ENCODE measurements at regions of chr19 and their contacts with region 1.

Region 1: GRCh38 chr19:5803752-5804515 is 933 bp upstream of the NRTN start:
- DNase-seq: peak; percentile 94
- ATAC-seq: peak; percentile 96
- H3K4me3 Mint-ChIP-seq: peak overlapping the region; percentile 70
- H3K27ac Mint-ChIP-seq: peak overlapping the region; percentile 60
- H3K4me1 Mint-ChIP-seq: peaks cover 25% of the 10 kb centered on the region
- H3K27me3 Mint-ChIP-seq: peaks cover 42% of the 10 kb centered on the region

Region 2: GRCh38 chr19:5631568-5632240 is 172.2 kb before region 1 on chr19:
- CTCF ChIA-PET with region 1: no interaction called
- POLR2A ChIA-PET with region 1: no interaction called
- DNase-seq: no peak
- ATAC-seq: no peak
- H3K4me3 Mint-ChIP-seq: no peak overlapping the region
- H3K27ac Mint-ChIP-seq: no peak overlapping the region
- H3K4me1 Mint-ChIP-seq: peaks cover 49% of the 10 kb centered on the region
- H3K27me3 Mint-ChIP-seq: no peaks in the 10 kb centered on the region

Region 3: GRCh38 chr19:5814852-5815246 is 10.9 kb after region 1 on chr19:
- CTCF ChIA-PET with region 1: interaction called, 23 read pairs
- POLR2A ChIA-PET with region 1: no interaction called
- DNase-seq: no peak
- ATAC-seq: no peak
- H3K4me3 Mint-ChIP-seq: no peak overlapping the region
- H3K27ac Mint-ChIP-seq: no peak overlapping the region
- H3K4me1 Mint-ChIP-seq: no peaks in the 10 kb centered on the region
- H3K27me3 Mint-ChIP-seq: peaks cover 2% of the 10 kb centered on the region

Region 4: DNA sequence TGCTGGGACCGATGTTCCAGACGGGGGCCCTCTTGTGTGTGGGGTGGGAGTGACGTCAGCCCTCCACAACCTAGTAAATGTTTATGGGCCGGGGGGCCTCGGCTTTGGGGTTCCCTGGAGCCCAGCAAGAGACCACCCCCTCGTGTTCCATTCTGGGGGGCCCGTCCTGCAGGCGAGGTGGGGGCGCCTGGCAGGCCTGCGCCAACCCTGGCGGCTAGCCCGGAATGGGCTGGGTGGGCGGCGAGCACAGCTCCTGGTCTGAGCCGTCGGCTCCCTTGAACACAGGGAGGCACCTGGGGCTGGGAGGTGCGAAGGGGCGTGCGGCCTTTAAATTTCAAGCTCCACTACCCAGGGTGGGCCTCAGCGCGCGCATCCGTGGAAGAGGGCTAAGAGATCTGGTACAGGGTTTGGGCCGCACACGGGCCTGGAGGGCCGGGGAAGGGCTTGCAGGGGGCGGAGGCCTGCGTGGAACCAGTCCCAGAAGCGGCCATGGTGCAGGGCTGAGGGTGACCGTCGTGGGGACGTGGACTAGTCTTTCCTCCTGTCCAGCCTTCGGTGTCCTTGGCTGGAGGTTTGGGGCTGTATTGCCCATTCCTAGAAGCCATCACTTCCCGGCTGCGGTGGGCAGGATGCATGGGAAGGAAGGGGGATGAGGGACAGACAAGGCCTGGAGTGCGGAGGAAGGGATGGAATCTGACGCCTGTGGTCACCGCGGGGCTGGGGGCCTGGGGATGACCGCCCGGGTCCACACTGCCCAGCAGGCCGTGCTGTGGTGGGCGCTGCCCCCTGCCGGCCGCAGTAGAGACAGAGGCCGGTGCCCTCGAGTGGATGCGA is 88.2 kb after region 1 on chr19:
- CTCF ChIA-PET with region 1: interaction called, 19 read pairs
- POLR2A ChIA-PET with region 1: interaction called, 4 read pairs
- DNase-seq: no peak
- ATAC-seq: peak; percentile 50
- H3K4me3 Mint-ChIP-seq: no peak overlapping the region
- H3K27ac Mint-ChIP-seq: no peak overlapping the region
- H3K4me1 Mint-ChIP-seq: no peaks in the 10 kb centered on the region
- H3K27me3 Mint-ChIP-seq: no peaks in the 10 kb centered on the region

Region 5: DNA sequence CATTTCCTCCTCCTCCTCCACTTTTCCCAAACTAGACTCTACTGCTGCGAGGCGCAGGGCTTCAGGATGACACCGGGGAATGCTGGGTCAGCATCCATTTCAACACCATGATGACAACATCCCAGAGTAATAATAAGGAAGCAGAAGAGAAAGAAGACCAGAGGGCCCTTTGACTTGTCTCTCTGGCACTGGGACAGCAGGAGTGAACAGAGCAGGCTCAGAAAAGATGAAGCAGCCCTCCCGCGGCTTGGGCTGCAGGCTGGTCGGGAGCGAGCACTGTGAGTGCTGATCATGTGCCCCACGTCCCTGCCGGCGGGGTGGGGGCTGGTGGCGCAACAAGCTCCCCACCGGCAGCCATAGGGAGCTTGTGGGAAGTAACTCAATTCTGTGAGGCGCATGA is 143.5 kb after region 1 on chr19:
- CTCF ChIA-PET with region 1: interaction called, 11 read pairs
- POLR2A ChIA-PET with region 1: no interaction called
- DNase-seq: no peak
- ATAC-seq: no peak
- H3K4me3 Mint-ChIP-seq: no peak overlapping the region
- H3K27ac Mint-ChIP-seq: peak overlapping the region; percentile 75
- H3K4me1 Mint-ChIP-seq: peaks cover 61% of the 10 kb centered on the region
- H3K27me3 Mint-ChIP-seq: no peaks in the 10 kb centered on the region

Region 6: GRCh38 chr19:5967994-5968430 is 164.1 kb after region 1 on chr19:
- CTCF ChIA-PET with region 1: interaction called, 20 read pairs
- POLR2A ChIA-PET with region 1: no interaction called
- DNase-seq: peak; percentile 77
- ATAC-seq: peak; percentile 66
- H3K4me3 Mint-ChIP-seq: no peak overlapping the region
- H3K27ac Mint-ChIP-seq: peak overlapping the region; percentile 60
- H3K4me1 Mint-ChIP-seq: peaks cover 80% of the 10 kb centered on the region
- H3K27me3 Mint-ChIP-seq: no peaks in the 10 kb centered on the region

Region 7: DNA sequence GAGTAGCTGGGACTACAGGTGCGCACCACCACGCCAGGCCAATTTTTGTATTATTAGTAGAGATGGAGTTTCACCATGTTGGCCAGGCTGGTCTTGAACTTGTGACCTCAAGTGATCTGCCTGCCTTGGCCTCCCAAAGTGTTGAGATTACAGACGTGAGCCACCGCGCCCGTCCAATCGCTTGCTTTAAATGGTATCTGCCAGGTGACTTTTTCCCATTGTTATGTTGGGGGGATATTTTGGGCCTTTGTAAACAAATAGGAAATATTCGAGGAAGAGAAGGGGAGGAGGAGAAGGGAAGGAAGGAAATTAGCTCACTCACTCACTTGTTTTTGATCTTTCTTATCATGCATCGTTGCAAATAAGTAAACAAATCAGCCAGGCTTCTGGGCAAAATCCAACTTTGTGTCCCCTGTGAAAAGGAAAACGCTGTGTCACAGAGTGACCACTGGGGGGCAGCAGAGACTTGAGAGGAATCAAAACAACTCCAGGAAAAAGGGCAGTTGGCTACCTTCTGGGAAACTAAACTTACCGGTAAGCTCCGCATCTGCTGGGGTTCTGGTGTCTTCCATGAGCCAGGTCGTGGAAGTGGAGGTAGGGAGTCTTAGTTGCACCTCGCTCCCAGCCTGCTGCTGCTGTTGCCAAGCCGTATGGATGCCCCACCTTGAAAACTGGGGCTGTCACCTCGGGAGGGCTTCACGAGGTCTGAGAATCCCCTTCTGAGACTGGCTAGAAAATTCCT is 183.3 kb after region 1 on chr19:
- CTCF ChIA-PET with region 1: interaction called, 21 read pairs
- POLR2A ChIA-PET with region 1: no interaction called
- DNase-seq: peak; percentile 83
- ATAC-seq: peak; percentile 57
- H3K4me3 Mint-ChIP-seq: peak overlapping the region; percentile 67
- H3K27ac Mint-ChIP-seq: peak overlapping the region; percentile 66
- H3K4me1 Mint-ChIP-seq: peaks cover 48% of the 10 kb centered on the region
- H3K27me3 Mint-ChIP-seq: no peaks in the 10 kb centered on the region